GM12878 (cell line): ENCODE measurements at regions of chr18 and their contacts with region 1.

Region 1: GRCh38 chr18:63664571-63664970 is 2.9 kb upstream of the SERPINB3 start:
- DNase-seq: no peak
- ATAC-seq: no peak
- H3K4me3 ChIP-seq: no peak overlapping the region
- H3K27ac ChIP-seq: no peak overlapping the region
- H3K4me1 ChIP-seq: no peaks in the 10 kb centered on the region
- H3K27me3 ChIP-seq: no peaks in the 10 kb centered on the region
- CTCF ChIP-seq: no peak
- EP300 ChIP-seq: no peak
- POLR2A ChIP-seq: no peak
- RAD21 ChIP-seq: no peak

Region 2: DNA sequence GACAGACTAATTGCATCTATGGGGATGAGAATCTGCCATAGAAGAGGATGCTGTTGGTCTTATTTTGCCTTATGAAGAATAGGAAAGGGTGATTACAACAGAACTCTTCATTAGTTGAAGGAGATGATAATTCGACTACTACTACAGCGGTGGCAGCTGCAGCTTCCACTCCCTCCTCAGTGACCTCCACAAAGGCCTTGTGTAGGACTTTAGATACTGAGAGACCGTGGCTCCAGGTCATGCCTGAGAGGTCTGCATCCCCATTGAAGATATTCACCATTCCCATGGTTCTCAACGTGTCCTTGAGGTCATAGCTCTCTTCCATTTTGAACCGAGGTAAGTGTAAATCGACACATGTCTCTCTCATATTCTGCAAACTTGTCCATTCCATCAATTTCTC is 26.9 kb before region 1 on chr18:
- CTCF ChIA-PET with region 1: no interaction called
- POLR2A ChIA-PET with region 1: no interaction called
- RAD21 ChIA-PET with region 1: no interaction called
- SMC1A ChIA-PET with region 1: no interaction called
- in situ Hi-C with region 1: no loop called
- intact Hi-C with region 1: loop called (anchors 2 kb)
- DNase-seq: no peak
- ATAC-seq: no peak
- H3K4me3 ChIP-seq: no peak overlapping the region
- H3K27ac ChIP-seq: no peak overlapping the region
- H3K4me1 ChIP-seq: no peaks in the 10 kb centered on the region
- H3K27me3 ChIP-seq: no peaks in the 10 kb centered on the region
- CTCF ChIP-seq: no peak
- EP300 ChIP-seq: no peak
- POLR2A ChIP-seq: no peak
- RAD21 ChIP-seq: no peak

Region 3: GRCh38 chr18:63848159-63848558 is 183.6 kb after region 1 on chr18:
- CTCF ChIA-PET with region 1: no interaction called
- POLR2A ChIA-PET with region 1: no interaction called
- RAD21 ChIA-PET with region 1: no interaction called
- SMC1A ChIA-PET with region 1: no interaction called
- in situ Hi-C with region 1: no loop called
- intact Hi-C with region 1: no loop called
- DNase-seq: no peak
- ATAC-seq: peak; percentile 71
- H3K4me3 ChIP-seq: no peak overlapping the region
- H3K27ac ChIP-seq: no peak overlapping the region
- H3K4me1 ChIP-seq: no peaks in the 10 kb centered on the region
- H3K27me3 ChIP-seq: peaks cover 0 to 4% of the 10 kb centered on the region in 2 experiments; a peak in 2 of 4 replicates
- CTCF ChIP-seq: peak; percentile 54 to 64 (median 57); a peak in 5 of 6 replicates
- EP300 ChIP-seq: no peak
- POLR2A ChIP-seq: no peak
- RAD21 ChIP-seq: peak; percentile 73